ENCODE measurements at regions of chr1 and their contacts with region 1.

Region 1: DNA sequence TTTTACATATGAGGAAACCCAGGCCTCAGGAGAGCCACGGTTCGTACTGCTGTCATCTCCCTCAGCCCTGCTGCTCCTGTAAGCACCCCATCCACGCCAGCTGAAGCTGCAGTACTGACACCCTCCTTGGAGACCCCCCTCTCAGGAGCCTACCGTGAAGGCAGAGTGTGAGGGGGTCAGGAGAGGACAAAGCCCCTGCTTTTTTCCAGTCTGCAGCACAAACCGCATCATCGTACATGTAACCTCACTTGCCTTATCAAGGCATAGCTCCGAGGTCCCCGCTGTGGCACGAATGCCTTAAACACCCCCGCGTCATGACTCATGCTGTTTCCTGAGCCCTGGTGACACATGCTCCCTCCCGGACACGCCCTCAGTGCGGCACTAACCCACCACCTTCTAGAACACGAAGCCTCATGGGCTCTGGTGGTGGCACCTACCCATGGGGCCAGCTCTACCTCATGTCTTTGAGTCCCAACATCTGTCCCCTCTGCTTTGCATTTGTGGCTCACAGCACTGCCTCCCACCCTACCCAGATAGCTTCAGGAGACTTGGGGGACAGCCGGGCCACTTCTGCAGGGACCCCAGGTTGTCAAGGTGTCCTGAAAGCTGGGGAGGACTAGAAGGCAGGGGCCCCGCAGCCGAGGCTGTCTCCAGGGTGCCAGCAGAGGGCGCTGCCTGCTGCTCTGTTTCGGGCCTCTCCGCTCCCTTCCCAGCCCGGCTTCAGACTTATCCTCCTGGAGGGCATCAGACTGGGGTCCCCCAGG is 4.9 kb downstream of the SH3BGRL3 start:
- DNase-seq: peak; percentile 83
- H3K4me3 ChIP-seq: no peak overlapping the region
- H3K27ac ChIP-seq: peak overlapping the region; percentile 98
- H3K4me1 ChIP-seq: peaks cover 62% of the 10 kb centered on the region
- CTCF ChIP-seq: peak; percentile 97

Region 2: GRCh38 chr1:26203642-26204318 is 81.0 kb before region 1 on chr1:
- CTCF ChIA-PET with region 1: no interaction called
- POLR2A ChIA-PET with region 1: no interaction called
- intact Hi-C with region 1: no loop called
- DNase-seq: peak; percentile 11
- H3K4me3 ChIP-seq: no peak overlapping the region
- H3K27ac ChIP-seq: no peak overlapping the region
- H3K4me1 ChIP-seq: no peaks in the 10 kb centered on the region
- CTCF ChIP-seq: peak; percentile 57

Region 3: DNA sequence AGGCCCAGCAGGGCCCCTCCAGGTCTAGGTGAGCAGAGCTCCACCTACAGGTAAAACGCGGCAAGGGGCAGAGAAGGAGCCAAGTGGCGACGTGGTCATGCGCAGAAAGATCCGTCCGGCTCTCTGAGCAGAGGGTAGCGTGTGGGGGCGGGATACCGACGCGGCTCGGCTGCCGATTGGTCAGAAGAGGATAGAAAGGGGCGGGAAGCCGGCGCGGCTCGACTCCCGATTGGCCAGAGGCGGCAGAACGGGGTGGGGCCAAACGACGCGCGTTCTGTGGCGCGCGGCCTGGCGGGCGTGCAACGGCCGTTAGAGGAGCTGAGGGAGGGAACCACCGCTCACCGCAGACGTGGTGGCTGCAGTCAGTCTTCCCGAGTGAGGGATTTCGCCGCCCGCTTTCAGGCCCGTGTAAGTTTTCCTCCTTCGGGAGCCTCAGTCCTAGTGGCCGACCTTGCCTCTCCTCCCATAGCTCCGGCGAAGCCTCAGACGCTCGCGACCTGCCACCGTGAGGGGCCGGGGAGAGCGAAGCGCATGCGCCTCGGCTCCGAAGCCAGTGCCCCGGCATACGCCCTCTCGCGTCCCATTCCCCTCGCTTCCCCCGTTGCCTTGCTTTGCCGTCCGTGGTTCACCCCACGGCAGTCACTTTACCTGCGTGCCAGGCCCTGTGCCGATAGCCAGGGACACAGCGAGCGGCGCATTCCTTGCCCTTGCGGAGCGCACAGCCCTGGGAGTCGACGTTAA is 50.7 kb before region 1 on chr1 and contains the start of gene CEP85:
- CTCF ChIA-PET with region 1: no interaction called
- POLR2A ChIA-PET with region 1: no interaction called
- intact Hi-C with region 1: no loop called
- DNase-seq: peak; percentile 98
- H3K4me3 ChIP-seq: peak within 1 kb of the TSS; percentile 86
- H3K27ac ChIP-seq: peak within 1 kb of the TSS; percentile 67
- H3K4me1 ChIP-seq: peaks cover 34% of the 10 kb centered on the region
- CTCF ChIP-seq: peak; percentile 87
- total RNA-seq, gene CEP85: 46.4 and 55.2 TPM in 2 replicates

Region 4: DNA sequence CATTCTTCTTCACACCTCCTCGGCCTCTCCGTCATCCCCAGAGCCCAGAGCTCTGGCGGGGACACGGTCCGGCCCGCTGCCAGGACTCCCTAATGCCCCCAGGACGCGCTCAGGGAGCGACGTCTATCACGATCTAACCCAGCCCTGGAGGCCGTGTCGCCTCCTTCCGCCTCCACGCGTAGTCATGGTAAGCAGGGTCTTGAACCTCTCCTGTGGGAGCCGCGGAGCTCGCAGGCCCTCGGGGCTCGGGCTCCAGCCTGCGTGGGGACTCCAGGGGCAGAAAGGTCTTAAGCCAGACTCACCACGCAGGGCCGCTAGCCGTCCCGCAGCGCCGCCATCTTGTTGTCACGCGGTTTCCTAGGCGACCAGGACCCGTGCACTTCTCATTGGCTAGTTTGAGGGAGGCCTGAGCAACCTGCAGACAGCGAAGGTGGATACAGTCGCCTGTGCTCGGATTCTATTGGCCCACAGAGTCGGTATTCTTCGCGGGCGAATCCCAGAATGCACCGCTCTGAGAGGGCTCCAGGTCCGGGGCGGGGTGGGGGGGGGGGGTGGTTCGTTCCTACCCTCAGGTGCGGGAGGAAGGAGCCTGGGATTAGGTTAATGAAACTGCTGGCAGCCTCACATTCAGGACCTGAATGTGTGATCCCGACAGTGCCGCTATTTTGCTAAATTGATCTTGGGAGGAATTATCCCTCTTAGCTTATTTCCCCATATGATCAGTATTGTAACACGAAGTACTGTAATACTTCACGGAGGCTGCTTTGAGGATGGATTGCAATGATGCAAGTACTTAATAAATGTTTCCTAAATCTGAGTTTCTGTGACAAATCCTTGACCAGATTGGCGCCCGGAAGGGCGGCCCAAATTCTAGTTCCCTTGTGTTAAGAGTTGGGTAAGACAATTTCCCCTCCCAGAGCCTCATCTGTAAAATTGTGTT is 21.8 kb after region 1 on chr1 and contains the start of gene UBXN11:
- CTCF ChIA-PET with region 1: interaction called, 23 read pairs
- POLR2A ChIA-PET with region 1: interaction called, 106 read pairs
- intact Hi-C with region 1: loop called (anchors 1 kb)
- DNase-seq: peak; percentile 98
- H3K4me3 ChIP-seq: peak within 1 kb of the TSS; percentile 95
- H3K27ac ChIP-seq: peak within 1 kb of the TSS; percentile 98
- H3K4me1 ChIP-seq: peaks cover 67% of the 10 kb centered on the region
- CTCF ChIP-seq: no peak
- total RNA-seq, gene UBXN11: 74.2 and 75.8 TPM in 2 replicates

Region 5: GRCh38 chr1:26321315-26322041 is 36.7 kb after region 1 on chr1:
- CTCF ChIA-PET with region 1: interaction called, 37 read pairs
- POLR2A ChIA-PET with region 1: interaction called, 273 read pairs
- intact Hi-C with region 1: loop called (anchors 1 kb)
- DNase-seq: peak; percentile 91
- H3K4me3 ChIP-seq: peak overlapping the region; percentile 93
- H3K27ac ChIP-seq: peak overlapping the region; percentile 91
- H3K4me1 ChIP-seq: peaks cover 49% of the 10 kb centered on the region
- CTCF ChIP-seq: peak; percentile 96

Region 6: GRCh38 chr1:26391450-26391849 is 106.7 kb after region 1 on chr1:
- CTCF ChIA-PET with region 1: no interaction called
- POLR2A ChIA-PET with region 1: no interaction called
- intact Hi-C with region 1: loop called (anchors 1 kb)
- DNase-seq: peak; percentile 40
- H3K4me3 ChIP-seq: no peak overlapping the region
- H3K27ac ChIP-seq: no peak overlapping the region
- H3K4me1 ChIP-seq: no peaks in the 10 kb centered on the region
- CTCF ChIP-seq: peak; percentile 69